CD8-positive, alpha-beta memory T cell (primary cell): ENCODE measurements at regions of chr15 and their contacts with region 1.

Region 1: DNA sequence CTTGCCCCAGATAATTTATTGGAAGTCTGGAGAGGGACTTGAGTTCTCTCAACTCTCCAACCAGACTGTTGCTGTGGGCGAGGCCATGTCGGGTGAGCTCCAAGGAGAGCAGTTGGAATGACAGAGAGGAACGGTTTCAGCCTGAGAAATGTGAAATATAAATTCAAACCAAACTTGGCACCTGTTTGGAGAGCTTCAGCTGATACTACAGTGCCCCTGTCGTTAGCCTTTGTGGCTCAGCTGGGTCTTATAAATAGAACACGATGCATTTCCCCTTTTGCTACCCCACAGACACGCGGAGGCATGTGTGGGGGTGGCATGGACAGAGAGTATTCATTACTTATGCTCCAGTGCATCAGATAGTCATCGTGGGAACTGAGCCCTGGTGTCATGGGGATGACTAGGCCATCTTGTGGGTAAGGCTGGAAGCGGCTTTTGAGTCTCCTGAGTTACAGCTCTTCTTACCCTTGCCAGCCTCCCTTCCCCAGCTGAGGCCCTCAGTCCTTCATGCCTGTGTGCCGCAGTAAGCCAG is 15.6 kb downstream of the SMAD3 start:
- DNase-seq: peak in 1 of 5 donors; percentile 60
- H3K4me3 ChIP-seq: no peak overlapping the region
- H3K4me3 Mint-ChIP-seq: peak overlapping the region; percentile 21 to 84 (median 64)
- H3K27ac ChIP-seq: no peak overlapping the region
- H3K27ac Mint-ChIP-seq: peak overlapping the region; percentile 89 to 96 (median 92)
- H3K4me1 ChIP-seq: peaks cover 91% of the 10 kb centered on the region
- H3K4me1 Mint-ChIP-seq: peaks cover 94 to 98% (median 97%) of the 10 kb centered on the region in 3 donors
- H3K27me3 ChIP-seq: no peaks in the 10 kb centered on the region
- H3K27me3 Mint-ChIP-seq: no peaks in the 10 kb centered on the region

Region 2: DNA sequence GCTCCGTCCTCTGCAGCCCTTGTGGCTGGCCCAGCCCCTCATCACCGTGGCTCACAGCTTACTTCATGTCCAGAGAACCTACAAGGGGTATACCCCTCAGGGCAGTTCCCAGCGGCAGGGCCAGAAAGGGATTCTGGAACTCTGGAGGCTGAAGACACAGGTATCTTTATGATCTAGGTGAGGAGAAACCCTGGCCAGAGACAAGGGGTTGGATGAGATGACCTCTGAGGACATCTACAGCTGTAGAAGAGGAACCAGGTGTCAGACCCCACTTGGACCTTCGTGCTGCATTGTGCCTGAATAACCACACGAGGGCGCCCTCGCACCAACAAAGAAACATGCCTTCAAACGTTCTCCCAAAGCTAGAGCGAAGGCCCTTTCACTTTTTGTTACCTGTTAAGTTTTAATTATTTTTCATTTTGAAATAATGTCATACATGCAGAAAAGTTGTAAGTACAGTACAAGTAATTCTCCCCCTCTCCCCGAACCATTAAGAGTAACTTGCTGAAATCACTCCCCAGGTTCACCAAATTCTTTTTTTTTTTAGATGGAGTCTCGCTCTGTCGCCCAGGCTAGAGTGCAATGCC is 134.3 kb before region 1 on chr15:
- CTCF ChIA-PET with region 1: no interaction called
- POLR2A ChIA-PET with region 1: no interaction called
- DNase-seq: peak; percentile 50 to 80 (median 58)
- H3K4me3 ChIP-seq: no peak overlapping the region
- H3K4me3 Mint-ChIP-seq: no peak overlapping the region
- H3K27ac ChIP-seq: no peak overlapping the region
- H3K27ac Mint-ChIP-seq: no peak overlapping the region
- H3K4me1 ChIP-seq: no peaks in the 10 kb centered on the region
- H3K4me1 Mint-ChIP-seq: peaks cover 0 to 8% (median 0%) of the 10 kb centered on the region in 3 donors
- H3K27me3 ChIP-seq: no peaks in the 10 kb centered on the region
- H3K27me3 Mint-ChIP-seq: peaks cover 0 to 2% of the 10 kb centered on the region in 2 donors

Region 3: GRCh38 chr15:66997212-66997611 is 83.8 kb before region 1 on chr15:
- CTCF ChIA-PET with region 1: no interaction called
- POLR2A ChIA-PET with region 1: no interaction called
- DNase-seq: no peak
- H3K4me3 ChIP-seq: no peak overlapping the region
- H3K4me3 Mint-ChIP-seq: no peak overlapping the region
- H3K27ac ChIP-seq: no peak overlapping the region
- H3K27ac Mint-ChIP-seq: no peak overlapping the region
- H3K4me1 ChIP-seq: no peaks in the 10 kb centered on the region
- H3K4me1 Mint-ChIP-seq: no peaks in the 10 kb centered on the region
- H3K27me3 ChIP-seq: no peaks in the 10 kb centered on the region
- H3K27me3 Mint-ChIP-seq: peaks cover 0 to 4% of the 10 kb centered on the region in 2 donors

Region 4: GRCh38 chr15:67065444-67066093 is 15.4 kb before region 1 on chr15 and contains the start of gene SMAD3:
- CTCF ChIA-PET with region 1: interaction called, 62 read pairs
- POLR2A ChIA-PET with region 1: interaction called, 25 read pairs
- DNase-seq: peak; percentile 47 to 82 (median 72)
- H3K4me3 ChIP-seq: peak within 1 kb of the TSS; percentile 93
- H3K4me3 Mint-ChIP-seq: peak within 1 kb of the TSS; percentile 94 to 99 (median 97)
- H3K27ac ChIP-seq: peak within 1 kb of the TSS; percentile 64
- H3K27ac Mint-ChIP-seq: peak within 1 kb of the TSS; percentile 62 to 96 (median 92)
- H3K4me1 ChIP-seq: peaks cover 47% of the 10 kb centered on the region
- H3K4me1 Mint-ChIP-seq: peaks cover 56 to 62% (median 59%) of the 10 kb centered on the region in 3 donors
- H3K27me3 ChIP-seq: no peaks in the 10 kb centered on the region
- H3K27me3 Mint-ChIP-seq: no peaks in the 10 kb centered on the region
- total RNA-seq, gene SMAD3: 30.2 to 34.2 TPM

Region 5: DNA sequence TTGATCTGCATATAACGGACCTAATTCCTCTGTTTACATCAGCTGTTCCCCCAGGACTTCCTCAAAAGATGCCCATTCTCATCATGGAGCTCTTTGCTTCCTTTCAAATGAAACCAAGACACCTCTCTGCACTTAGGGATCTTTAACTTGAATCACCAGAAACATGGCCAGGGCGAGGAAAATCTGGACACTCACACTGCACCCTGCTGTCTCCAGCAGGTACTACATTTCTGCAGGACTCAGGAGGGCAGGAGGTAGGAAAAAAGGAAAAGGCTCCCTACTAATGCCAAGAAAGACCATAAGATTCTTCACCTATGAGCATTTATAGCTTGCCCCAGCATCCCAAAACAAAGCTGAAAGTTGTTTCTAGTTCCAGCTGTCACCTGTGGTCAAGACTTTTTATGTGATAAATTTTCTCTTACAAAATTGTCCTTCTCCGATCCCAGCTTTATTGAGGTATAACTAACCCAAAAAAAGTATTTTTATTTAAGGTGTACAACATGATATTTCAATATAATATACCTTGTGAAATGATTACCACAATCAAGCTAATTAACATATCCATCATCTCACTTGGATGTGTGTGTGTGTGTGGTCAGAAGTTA is 352.6 kb after region 1 on chr15:
- CTCF ChIA-PET with region 1: no interaction called
- POLR2A ChIA-PET with region 1: no interaction called
- DNase-seq: no peak
- H3K4me3 ChIP-seq: no peak overlapping the region
- H3K4me3 Mint-ChIP-seq: no peak overlapping the region
- H3K27ac ChIP-seq: no peak overlapping the region
- H3K27ac Mint-ChIP-seq: no peak overlapping the region
- H3K4me1 ChIP-seq: no peaks in the 10 kb centered on the region
- H3K4me1 Mint-ChIP-seq: no peaks in the 10 kb centered on the region
- H3K27me3 ChIP-seq: no peaks in the 10 kb centered on the region
- H3K27me3 Mint-ChIP-seq: no peaks in the 10 kb centered on the region